ENCODE measurements at regions of chrX and their contacts with region 1.

Region 1: GRCh38 chrX:100980605-100981497 is 11.3 kb downstream of the ARL13A start:
- DNase-seq: peak; percentile 85
- ATAC-seq: peak; percentile 82
- H3K4me3 ChIP-seq: 0 out of 2 replicates have a peak overlapping the region, but pooled peaks have one; percentile 12
- H3K27ac ChIP-seq: peak overlapping the region; percentile 100
- H3K4me1 ChIP-seq: peaks cover 44% of the 10 kb centered on the region
- H3K27me3 ChIP-seq: no peaks in the 10 kb centered on the region
- CTCF ChIP-seq: no peak

Region 2: GRCh38 chrX:100819837-100820666 is 160.8 kb before region 1 on chrX and contains the start of gene CSTF2:
- CTCF ChIA-PET with region 1: no interaction called
- POLR2A ChIA-PET with region 1: no interaction called
- intact Hi-C with region 1: loop called (anchors 10 kb)
- DNase-seq: peak; percentile 88
- ATAC-seq: peak; percentile 99
- H3K4me3 ChIP-seq: peak within 1 kb of the TSS; percentile 93
- H3K27ac ChIP-seq: peak within 1 kb of the TSS; percentile 54
- H3K4me1 ChIP-seq: peaks cover 8% of the 10 kb centered on the region
- H3K27me3 ChIP-seq: no peaks in the 10 kb centered on the region
- CTCF ChIP-seq: no peak
- total RNA-seq, gene CSTF2: 64.1 and 67.7 TPM in 2 replicates

Region 3: GRCh38 chrX:100931218-100931924 is 49.5 kb before region 1 on chrX:
- CTCF ChIA-PET with region 1: no interaction called
- POLR2A ChIA-PET with region 1: no interaction called
- intact Hi-C with region 1: no loop called
- DNase-seq: no peak
- ATAC-seq: no peak
- H3K4me3 ChIP-seq: no peak overlapping the region
- H3K27ac ChIP-seq: no peak overlapping the region
- H3K4me1 ChIP-seq: no peaks in the 10 kb centered on the region
- H3K27me3 ChIP-seq: no peaks in the 10 kb centered on the region
- CTCF ChIP-seq: no peak

Region 4: DNA sequence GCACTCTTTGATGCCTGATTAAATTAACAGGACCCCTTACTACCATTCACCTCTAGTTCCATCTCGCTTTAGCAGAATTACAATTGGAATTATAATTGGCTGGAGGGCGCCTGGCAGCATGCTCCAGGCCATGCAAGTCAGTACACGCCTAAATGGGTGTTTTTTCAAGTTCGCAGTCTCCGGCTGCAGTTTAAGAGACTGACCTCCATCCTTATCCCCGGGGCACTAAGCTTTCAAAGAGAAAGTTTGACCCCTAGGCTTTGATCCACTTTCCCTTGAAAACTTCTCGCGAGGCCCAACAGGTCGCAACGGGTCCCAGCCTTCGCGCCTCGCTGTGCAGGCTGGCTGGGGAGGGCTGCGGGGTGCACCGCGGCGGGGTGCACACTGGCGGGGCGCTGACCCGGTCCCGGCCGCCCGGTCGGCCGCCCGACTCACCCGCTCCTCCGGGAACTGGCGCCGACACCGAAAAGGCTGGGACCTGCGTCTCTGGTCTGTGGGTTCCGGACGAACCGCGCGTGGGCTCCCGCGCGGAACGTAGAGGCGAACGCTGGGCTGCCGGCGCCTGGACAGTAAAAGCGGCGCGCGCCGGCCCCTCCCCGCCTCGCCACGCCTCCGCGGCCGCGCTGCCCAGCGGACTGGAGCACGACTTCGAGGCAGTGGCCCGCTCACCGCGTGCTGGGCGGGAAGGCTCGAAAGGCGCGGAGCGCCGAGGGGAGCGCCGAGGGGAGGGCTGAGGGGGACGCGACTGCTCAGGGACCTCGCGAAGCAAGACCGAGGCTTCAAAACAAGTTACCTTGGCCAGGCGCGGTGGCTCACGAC is 310.1 kb after region 1 on chrX and contains the start of gene TAF7L:
- CTCF ChIA-PET with region 1: no interaction called
- POLR2A ChIA-PET with region 1: no interaction called
- intact Hi-C with region 1: no loop called
- DNase-seq: no peak
- ATAC-seq: no peak
- H3K4me3 ChIP-seq: no peak within 1 kb of the TSS
- H3K27ac ChIP-seq: no peak within 1 kb of the TSS
- H3K4me1 ChIP-seq: no peaks in the 10 kb centered on the region
- H3K27me3 ChIP-seq: no peaks in the 10 kb centered on the region
- CTCF ChIP-seq: no peak
- total RNA-seq, gene TAF7L: 0.35 TPM in 1 of 2 replicates, not detected in the other

Measured in PC-3 (cell line).